GM12878 (cell line): ENCODE measurements at regions of chr11 and their contacts with region 1.

Region 1: DNA sequence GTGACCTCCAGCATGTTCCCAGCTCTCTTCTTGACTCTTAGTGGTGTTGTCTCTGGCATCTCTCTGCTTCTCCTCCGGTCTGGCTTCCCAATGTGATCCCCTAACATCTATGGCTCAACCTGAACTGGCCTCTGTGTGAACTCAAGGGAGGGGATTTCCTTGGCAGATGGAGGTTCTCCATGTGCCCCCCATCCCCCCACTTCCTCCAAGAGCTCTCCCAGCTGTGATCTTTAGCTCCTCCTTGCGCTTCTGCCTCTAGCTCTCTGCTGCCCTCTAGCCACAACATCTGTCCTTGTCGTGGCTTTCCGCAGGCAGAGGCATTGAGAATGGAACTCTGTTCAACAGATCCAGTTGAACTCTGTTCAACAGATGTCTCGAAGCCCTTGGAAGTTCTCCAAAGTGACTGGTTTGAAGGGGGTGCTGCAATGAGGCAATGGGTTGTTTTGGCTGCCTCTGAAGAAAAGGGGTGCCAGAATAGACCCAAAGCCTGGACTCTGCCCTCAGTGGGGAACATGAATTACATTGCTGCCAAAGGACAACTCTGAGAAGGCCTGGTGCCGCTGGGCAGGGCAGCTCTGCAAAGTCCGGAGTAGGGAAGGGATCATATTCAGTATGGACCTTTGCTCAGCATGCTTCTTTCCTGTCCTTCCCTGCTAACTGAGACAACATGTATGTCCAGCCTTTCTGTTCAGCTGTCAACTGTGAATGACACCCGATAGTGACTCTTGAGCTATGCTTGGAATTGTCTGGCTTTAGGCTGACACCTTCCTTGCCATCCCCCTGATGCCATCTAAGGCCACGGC is 61.9 kb downstream of the ADM start:
- DNase-seq: peak; percentile 57
- ATAC-seq: peak; percentile 98
- H3K4me3 ChIP-seq: no peak overlapping the region
- H3K27ac ChIP-seq: no peak overlapping the region
- H3K4me1 ChIP-seq: no peaks in the 10 kb centered on the region; the same call in 1 of the 2 replicates
- H3K27me3 ChIP-seq: no peaks in the 10 kb centered on the region
- CTCF ChIP-seq: peak; percentile 85 to 92 (median 91)
- EP300 ChIP-seq: peak in 1 of 2 experiments; percentile 37; a peak in 1 of 4 replicates
- POLR2A ChIP-seq: no peak
- RAD21 ChIP-seq: peak; percentile 75

Region 2: DNA sequence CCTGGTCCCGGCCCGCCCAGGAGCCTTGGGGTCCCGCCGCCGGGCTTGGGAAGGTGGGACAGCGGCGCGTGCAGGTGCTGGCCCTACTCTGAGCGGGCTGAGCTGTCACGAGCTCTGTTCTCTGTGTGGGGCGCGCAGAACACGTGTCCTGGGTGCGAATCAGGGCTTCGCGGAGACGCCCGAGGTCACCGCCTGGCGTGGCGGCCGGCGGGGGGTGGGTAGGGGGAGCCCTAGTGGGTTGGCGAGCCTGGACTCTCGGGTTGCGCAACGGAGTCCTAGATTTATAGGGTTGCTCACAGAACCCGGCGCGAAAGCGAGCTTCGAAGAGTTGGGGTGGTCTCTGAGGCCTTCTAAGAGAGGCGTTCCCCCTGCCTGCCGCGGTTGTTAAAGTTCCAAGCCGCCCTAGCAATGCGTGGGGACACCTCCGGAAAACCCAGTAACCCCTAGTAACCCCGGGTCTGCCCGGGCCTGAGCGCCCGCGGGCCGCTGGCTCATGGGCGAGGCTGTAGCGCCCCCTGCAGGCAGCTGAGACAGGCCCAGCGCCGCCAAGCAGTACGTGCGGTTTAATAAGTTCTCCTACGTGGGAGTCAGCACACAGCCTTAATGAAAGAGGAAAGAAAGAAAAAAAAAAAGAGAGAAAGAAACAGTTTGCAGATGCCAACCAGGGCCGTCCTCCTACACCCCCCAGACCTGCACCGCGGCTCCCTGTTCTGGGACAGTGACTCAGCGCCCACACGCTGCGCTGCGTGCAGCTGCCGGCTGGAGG is 59.1 kb before region 1 on chr11:
- CTCF ChIA-PET with region 1: interaction called, 14 read pairs
- POLR2A ChIA-PET with region 1: no interaction called
- RAD21 ChIA-PET with region 1: interaction called, 9 read pairs
- SMC1A ChIA-PET with region 1: interaction called, 10 read pairs
- in situ Hi-C with region 1: no loop called
- intact Hi-C with region 1: no loop called
- DNase-seq: peak; percentile 60
- ATAC-seq: peak; percentile 84
- H3K4me3 ChIP-seq: peak overlapping the region; percentile 48; the same call in 1 of the 2 replicates
- H3K27ac ChIP-seq: peak overlapping the region; percentile 20; the same call in 1 of the 2 replicates
- H3K4me1 ChIP-seq: peaks cover 47% of the 10 kb centered on the region
- H3K27me3 ChIP-seq: peaks cover 32 to 41% of the 10 kb centered on the region in 2 experiments
- CTCF ChIP-seq: peak; percentile 78 to 89 (median 87)
- EP300 ChIP-seq: 0 out of 4 replicates have a peak, but pooled peaks of 1 of the 2 experiments have one; percentile 16
- POLR2A ChIP-seq: no peak; the same call in 1 of the 2 replicates
- RAD21 ChIP-seq: peak; percentile 86

Region 3: GRCh38 chr11:10355257-10355661 is 11.5 kb before region 1 on chr11:
- CTCF ChIA-PET with region 1: interaction called, 27 read pairs
- POLR2A ChIA-PET with region 1: no interaction called
- RAD21 ChIA-PET with region 1: no interaction called
- SMC1A ChIA-PET with region 1: interaction called, 5 read pairs
- in situ Hi-C with region 1: no loop called
- intact Hi-C with region 1: no loop called
- DNase-seq: no peak
- ATAC-seq: no peak
- H3K4me3 ChIP-seq: no peak overlapping the region
- H3K27ac ChIP-seq: no peak overlapping the region
- H3K4me1 ChIP-seq: no peaks in the 10 kb centered on the region
- H3K27me3 ChIP-seq: peaks cover 0 to 8% of the 10 kb centered on the region in 2 experiments; a peak in 1 of 4 replicates
- CTCF ChIP-seq: no peak
- EP300 ChIP-seq: no peak
- POLR2A ChIP-seq: no peak
- RAD21 ChIP-seq: no peak

Region 4: DNA sequence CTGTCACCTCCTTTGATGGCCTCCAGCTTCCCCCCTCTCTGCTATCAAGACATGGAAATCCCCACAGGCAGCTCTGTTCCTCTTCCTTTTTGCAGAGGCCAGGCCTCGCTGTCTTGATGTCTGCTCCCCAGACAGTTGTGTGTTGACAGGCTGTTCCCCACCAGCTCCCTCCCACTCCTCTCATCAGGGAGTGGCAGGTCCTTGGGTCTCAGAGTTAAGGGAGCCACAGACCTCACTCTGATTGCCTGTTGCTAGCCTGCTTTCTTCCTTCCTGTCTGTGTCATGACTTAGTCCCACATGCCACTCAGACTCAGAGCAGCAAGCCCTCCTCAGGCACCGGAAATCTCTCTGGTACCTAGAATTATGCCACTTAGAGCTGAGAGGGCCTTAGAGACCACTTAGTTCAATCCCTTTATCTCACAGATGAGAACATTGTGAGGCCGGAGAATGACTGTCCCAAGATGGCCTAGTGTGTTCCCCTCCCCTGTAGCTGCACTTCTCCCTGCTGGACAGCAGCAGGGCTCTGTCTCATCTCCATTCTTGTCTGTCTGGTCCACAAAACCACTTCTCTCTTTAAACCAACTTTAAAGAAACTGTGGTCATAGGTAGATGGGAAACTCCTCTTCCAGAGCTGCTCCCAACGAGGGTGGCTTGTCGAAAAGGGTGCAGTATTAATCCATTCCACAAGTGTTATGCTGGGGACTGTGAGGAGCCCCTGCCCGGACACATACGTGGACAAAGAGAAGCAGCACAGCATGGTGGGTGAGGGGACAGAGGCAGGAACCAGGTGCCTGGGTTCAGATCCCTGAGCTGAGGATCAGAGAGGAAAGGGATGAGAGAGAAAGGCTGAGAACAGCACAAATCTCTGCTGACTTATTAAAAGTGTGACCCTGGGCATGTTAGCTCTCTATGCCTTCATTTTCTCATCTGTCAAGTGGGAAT is 92.5 kb after region 1 on chr11:
- CTCF ChIA-PET with region 1: no interaction called
- POLR2A ChIA-PET with region 1: no interaction called
- RAD21 ChIA-PET with region 1: no interaction called
- SMC1A ChIA-PET with region 1: no interaction called
- in situ Hi-C with region 1: no loop called
- intact Hi-C with region 1: no loop called
- DNase-seq: peak; percentile 80
- ATAC-seq: peak; percentile 57
- H3K4me3 ChIP-seq: peak overlapping the region; percentile 43
- H3K27ac ChIP-seq: peak overlapping the region; percentile 62
- H3K4me1 ChIP-seq: peaks cover 48% of the 10 kb centered on the region
- H3K27me3 ChIP-seq: no peaks in the 10 kb centered on the region
- CTCF ChIP-seq: no peak
- EP300 ChIP-seq: no peak
- POLR2A ChIP-seq: peak; percentile 38; the same call in 1 of the 2 replicates
- RAD21 ChIP-seq: peak; percentile 20; the same call in 1 of the 2 replicates